BJ (cell line): ENCODE measurements at regions of chr12 and their contacts with region 1.

Region 1: GRCh38 chr12:5872735-5873134 is 72.3 kb downstream of the ANO2 start:
- DNase-seq: no peak
- H3K4me3 ChIP-seq: no peak overlapping the region
- H3K27me3 ChIP-seq: peaks cover 2% of the 10 kb centered on the region
- CTCF ChIP-seq: peak; percentile 55

Region 2: DNA sequence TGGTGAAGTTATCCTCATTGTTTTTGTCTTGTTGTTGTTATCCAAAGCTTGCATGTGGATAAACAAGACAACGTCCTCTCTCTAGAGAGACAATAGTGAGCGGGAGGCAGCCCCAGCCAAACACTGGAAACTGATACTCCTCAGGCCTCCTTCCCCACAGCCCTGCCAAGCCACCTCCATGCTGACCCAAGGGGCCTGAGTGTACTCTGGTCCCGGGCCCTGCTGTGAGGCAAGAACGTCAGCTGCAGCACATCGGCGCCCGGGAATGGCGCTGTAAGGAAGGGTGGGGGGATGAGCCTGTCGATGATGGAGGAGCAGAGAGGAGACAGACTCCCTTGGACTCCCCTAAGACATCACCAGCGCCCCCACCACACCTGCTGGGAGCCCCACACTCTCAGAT is 11.3 kb before region 1 on chr12:
- CTCF ChIA-PET with region 1: interaction called, 10 read pairs
- POLR2A ChIA-PET with region 1: no interaction called
- DNase-seq: no peak
- H3K4me3 ChIP-seq: no peak overlapping the region
- H3K27me3 ChIP-seq: no peaks in the 10 kb centered on the region
- CTCF ChIP-seq: no peak